Activated CD4-positive, alpha-beta memory T cell treated with anti-CD3 and anti-CD28 coated beads for 36 hours (primary cell): ENCODE measurements at regions of chr1 and their contacts with region 1.

Region 1: DNA sequence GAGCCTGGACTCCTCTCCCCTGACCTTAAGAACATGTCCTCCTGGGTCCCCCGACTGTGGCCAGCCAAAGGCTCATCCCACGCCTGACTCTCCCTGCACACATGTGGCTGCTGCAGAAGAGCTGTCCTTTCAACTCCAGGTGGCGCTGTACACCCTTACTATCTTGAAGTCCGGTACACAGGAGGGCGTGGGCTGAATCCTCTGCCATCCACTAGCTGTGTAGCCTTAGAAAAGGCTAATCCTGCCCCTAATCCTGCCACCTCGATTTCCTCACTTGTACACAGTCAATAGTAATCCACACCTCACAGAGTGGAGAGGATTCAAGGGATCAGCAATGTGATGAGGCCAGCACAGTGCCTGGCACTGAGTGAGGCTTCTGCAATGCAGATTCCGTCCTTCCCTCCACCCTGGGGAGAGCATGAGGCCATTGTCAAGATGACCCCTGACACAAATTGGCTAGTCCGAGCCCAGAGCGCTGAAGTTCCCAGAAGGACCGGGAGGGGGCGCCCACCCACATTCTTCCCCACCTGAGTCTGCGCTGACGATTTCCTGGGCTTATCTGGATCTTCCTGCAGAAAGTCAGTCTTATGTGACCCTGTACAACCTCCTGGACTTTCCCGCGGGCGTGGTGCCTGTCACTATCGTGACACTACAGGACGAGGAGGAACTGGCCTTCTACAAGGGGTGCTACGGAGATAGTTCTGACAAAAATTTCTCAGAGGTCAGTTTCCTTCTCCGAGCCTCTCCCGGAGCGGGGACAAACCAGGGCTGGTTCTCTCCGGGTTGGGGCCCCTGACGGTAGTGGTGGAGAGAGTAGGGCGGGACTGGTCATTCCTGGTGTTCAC is 47.1 kb upstream of the DMBX1 start:
- DNase-seq: peak; percentile 83
- H3K4me3 Mint-ChIP-seq: peak overlapping the region; percentile 78
- H3K27ac Mint-ChIP-seq: peak overlapping the region; percentile 72
- H3K4me1 Mint-ChIP-seq: peaks cover 14% of the 10 kb centered on the region
- H3K27me3 Mint-ChIP-seq: peaks cover 18% of the 10 kb centered on the region

Region 2: DNA sequence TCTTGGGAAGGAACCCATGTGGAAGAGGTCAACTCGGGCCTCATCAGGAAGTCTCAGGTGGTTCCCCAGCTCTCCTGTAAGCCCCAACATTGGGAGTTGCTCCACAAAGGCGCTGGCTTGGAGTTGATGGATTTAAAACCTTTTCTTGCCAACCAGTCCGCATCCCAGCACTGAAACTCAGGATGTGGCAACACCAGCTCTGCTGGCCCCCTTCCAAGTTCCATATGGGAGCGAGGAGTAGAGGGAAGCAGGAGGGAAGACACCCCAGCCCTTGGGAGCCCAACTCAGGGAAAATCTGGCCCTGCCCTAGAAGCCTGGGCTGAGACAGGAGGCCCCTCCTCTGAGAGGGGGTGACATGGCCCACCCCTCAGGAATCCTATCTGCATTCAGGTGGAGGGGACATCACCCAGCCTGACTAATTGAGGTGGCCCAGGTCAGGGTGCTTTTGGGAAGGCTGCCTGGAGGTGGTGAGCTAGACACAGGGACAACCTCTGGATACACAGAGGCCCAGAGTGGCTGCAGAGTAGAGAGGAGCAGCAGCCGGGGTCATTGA is 13.9 kb after region 1 on chr1:
- CTCF ChIA-PET with region 1: interaction called, 12 read pairs
- POLR2A ChIA-PET with region 1: no interaction called
- intact Hi-C with region 1: no loop called
- DNase-seq: no peak
- H3K4me3 Mint-ChIP-seq: no peak overlapping the region
- H3K27ac Mint-ChIP-seq: no peak overlapping the region
- H3K4me1 Mint-ChIP-seq: no peaks in the 10 kb centered on the region
- H3K27me3 Mint-ChIP-seq: peaks cover 19% of the 10 kb centered on the region

Region 3: GRCh38 chr1:46489638-46490405 is 47.3 kb after region 1 on chr1 and contains the start of gene DMBX1:
- CTCF ChIA-PET with region 1: interaction called, 6 read pairs
- POLR2A ChIA-PET with region 1: no interaction called
- intact Hi-C with region 1: loop called (anchors 2 kb)
- DNase-seq: peak; percentile 68
- H3K4me3 Mint-ChIP-seq: peak within 1 kb of the TSS; percentile 67
- H3K27ac Mint-ChIP-seq: no peak within 1 kb of the TSS
- H3K4me1 Mint-ChIP-seq: peaks cover 33% of the 10 kb centered on the region
- H3K27me3 Mint-ChIP-seq: peaks cover 81% of the 10 kb centered on the region
- total RNA-seq, gene DMBX1: 0.10 to 0.12 TPM

Region 4: DNA sequence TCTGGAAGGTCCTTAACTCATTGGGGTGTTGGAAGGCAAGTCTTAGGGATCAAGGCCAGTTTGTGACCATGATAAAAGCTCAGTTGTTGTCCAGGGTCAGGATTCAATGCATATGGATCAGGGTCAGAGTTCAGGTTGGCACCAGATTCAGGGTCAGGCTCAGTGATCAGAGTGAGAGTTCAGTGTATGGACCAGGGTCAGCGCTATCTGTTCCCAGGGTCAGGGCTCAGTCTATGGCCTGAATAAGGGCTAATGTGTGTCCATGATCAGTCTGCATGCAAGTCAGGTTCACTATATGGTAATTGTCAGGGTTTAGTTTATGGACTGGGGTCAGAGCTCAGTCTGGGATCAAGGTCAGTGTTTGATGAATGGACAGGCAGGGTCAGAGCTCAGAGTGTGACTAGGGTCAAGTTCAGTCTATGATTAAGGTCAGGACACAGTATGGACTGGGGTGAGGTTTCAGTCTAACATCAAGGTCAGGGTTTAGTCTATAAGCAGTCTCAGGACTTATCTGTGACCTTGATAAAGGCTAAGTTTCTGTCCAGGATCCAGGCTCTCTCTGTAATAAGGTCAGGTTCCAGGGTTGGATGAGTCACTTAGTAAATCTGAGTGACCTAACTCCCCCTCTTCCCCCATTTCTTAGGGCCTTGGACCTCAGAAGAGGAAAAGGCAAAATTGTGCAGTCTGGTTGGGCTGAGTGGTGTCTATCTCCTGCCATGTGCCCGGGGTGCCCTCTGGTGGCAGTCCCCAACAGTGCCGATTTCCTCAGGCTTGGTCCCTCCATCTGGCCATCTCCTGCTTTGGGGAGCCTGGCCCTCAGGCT is 85.1 kb after region 1 on chr1:
- CTCF ChIA-PET with region 1: interaction called, 250 read pairs
- POLR2A ChIA-PET with region 1: interaction called, 4 read pairs
- intact Hi-C with region 1: loop called (anchors 1 kb)
- DNase-seq: peak; percentile 87
- H3K4me3 Mint-ChIP-seq: no peak overlapping the region
- H3K27ac Mint-ChIP-seq: no peak overlapping the region
- H3K4me1 Mint-ChIP-seq: peaks cover 22% of the 10 kb centered on the region
- H3K27me3 Mint-ChIP-seq: peaks cover 32% of the 10 kb centered on the region

Region 5: DNA sequence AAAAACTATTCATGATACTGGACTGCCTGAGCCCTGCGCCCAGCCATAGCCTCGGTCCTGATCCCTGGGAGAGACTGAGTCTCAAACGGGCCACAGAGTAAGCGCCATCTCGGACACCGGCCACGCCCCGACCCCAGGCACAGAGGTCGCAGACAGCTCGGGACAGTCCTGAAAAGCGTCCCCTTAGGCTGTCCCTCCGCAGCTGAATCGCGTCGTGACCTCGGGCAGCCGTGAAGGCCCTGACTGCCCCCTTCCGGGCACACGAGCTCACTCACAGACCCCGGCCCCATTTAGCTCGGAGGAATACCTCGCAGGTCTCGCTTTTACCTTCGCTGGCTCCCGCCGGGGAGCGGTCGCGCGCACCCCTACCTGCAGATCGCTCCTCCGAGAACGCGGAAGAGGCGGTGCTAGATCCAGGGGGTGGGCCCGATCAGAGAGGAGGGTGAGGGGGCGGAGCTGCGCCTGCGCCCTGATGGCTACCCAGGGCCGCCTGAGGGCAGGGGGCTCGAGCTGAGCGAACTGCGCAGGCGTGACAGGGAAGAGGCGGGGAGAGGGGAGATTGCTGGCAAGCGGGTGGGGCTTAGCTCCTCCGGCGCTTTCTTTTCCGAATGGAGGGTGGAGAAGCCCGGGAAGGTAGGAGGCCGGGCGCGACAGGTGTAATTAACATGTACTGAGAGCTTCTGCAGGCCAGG is 161.5 kb after region 1 on chr1 and contains the start of gene MKNK1:
- CTCF ChIA-PET with region 1: interaction called, 5 read pairs
- POLR2A ChIA-PET with region 1: no interaction called
- intact Hi-C with region 1: loop called (anchors 1 kb)
- DNase-seq: peak; percentile 99
- H3K4me3 Mint-ChIP-seq: peak within 1 kb of the TSS; percentile 85
- H3K27ac Mint-ChIP-seq: peak within 1 kb of the TSS; percentile 77
- H3K4me1 Mint-ChIP-seq: peaks cover 53% of the 10 kb centered on the region
- H3K27me3 Mint-ChIP-seq: no peaks in the 10 kb centered on the region
- total RNA-seq, gene MKNK1: 28.2 to 28.5 TPM